Ascending aorta (tissue), 2 donors: ENCODE measurements at regions of chr12 and their contacts with region 1.

Region 1: GRCh38 chr12:70242695-70243509 is at the start of gene CNOT2:
- DNase-seq: peak; percentile 70 to 94
- H3K4me3 ChIP-seq: peak within 1 kb of the TSS; percentile 89 to 92
- H3K27ac ChIP-seq: peak within 1 kb of the TSS; percentile 97 to 98
- H3K4me1 ChIP-seq: peaks cover 5 to 29% of the 10 kb centered on the region in 2 donors
- H3K27me3 ChIP-seq: no peaks in the 10 kb centered on the region
- CTCF ChIP-seq: no peak
- total RNA-seq, gene CNOT2: 71.7 TPM

Region 2: DNA sequence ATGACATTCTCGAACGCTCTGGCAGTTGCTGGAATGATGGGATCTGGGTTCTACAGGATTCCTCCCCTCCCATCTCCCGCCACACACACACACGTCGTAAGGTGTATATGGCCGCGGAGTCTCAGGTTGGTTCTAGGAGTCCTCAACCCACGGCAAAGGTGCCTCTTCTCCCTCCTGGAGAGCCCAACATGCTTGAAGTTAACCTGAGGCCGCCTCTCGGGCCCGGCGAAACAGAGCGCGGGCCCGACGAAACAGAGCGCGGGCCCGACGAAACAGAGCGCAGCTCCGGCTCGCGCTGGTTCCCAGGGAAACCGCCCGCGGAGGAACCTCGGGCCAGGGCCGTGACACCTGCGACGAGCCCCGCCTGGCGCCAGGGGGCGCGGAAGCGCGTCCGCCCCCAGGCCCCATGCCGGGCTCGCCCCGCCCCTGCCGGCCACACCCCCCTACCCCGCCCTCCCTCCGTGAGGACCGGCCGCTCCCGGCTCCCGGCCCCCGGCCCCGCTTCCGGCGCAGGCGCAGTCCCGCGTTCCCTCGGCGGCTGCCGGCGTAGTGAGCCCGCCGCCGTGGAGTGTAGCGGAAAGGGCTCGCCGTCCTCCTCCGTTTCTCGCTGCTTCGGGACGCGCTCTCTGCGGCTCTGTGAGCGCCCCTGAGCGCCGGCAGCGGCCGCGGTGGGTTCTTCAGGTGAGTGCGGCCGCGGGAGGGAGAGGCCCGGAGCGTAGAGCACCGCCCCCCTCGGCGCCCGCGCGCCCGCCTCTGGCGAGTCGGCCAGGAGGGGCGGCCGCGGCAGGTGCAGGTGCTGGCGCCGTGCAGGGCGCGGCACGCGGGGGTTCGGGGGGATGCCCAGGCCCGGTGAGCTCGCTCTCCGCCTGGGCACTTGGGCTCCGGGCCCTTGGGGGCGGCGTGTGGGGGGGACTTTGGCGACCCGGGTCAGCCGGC is 504.3 kb before region 1 on chr12 and contains the start of gene RAB3IP:
- intact Hi-C with region 1: loop called (anchors 2 kb)
- DNase-seq: peak; percentile 35 to 87
- H3K4me3 ChIP-seq: peak within 1 kb of the TSS; percentile 92 to 95
- H3K27ac ChIP-seq: peak within 1 kb of the TSS; percentile 15 to 53
- H3K4me1 ChIP-seq: peaks cover 0 to 7% of the 10 kb centered on the region in 2 donors
- H3K27me3 ChIP-seq: no peaks in the 10 kb centered on the region
- CTCF ChIP-seq: peak; percentile 25 to 63 (median 51)
- total RNA-seq, gene RAB3IP: 17.2 TPM

Region 3: DNA sequence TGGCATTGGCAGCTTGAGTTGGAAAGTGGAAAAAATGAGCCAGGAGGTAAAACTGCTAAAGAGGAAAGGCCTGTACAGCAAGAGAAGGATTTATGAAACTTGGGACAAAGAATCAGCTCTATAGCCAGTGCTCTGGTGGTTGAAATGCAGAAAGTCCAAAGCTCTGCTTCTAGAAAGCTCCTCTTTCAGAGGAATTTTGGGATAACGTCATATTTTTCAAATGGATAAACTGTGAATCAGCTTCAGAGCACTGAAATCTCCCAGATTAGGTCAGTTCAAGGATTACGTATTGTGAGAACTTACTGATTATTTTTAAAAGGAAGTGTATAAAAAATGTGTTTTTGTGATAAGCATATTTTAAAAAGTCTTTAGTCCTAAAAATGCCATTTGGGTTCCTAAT is 202.8 kb before region 1 on chr12:
- intact Hi-C with region 1: loop called (anchors 5 kb)
- DNase-seq: no peak
- H3K4me3 ChIP-seq: no peak overlapping the region
- H3K27ac ChIP-seq: peak overlapping the region; percentile 45 to 66
- H3K4me1 ChIP-seq: peaks cover 0 to 7% of the 10 kb centered on the region in 2 donors
- H3K27me3 ChIP-seq: no peaks in the 10 kb centered on the region
- CTCF ChIP-seq: peak in 1 of 3 experiments; percentile 8

Region 4: GRCh38 chr12:70660620-70661219 is 417.8 kb after region 1 on chr12:
- intact Hi-C with region 1: no loop called
- DNase-seq: no peak
- H3K4me3 ChIP-seq: no peak overlapping the region
- H3K27ac ChIP-seq: no peak overlapping the region
- H3K4me1 ChIP-seq: peaks cover 0 to 2% of the 10 kb centered on the region in 2 donors
- H3K27me3 ChIP-seq: no peaks in the 10 kb centered on the region
- CTCF ChIP-seq: no peak

Region 5: GRCh38 chr12:71007781-71008404 is 765.0 kb after region 1 on chr12:
- intact Hi-C with region 1: loop called (anchors 10 kb)
- DNase-seq: no peak
- H3K4me3 ChIP-seq: no peak overlapping the region
- H3K27ac ChIP-seq: no peak overlapping the region
- H3K4me1 ChIP-seq: peaks cover 0 to 2% of the 10 kb centered on the region in 2 donors
- H3K27me3 ChIP-seq: no peaks in the 10 kb centered on the region
- CTCF ChIP-seq: no peak

Region 6: GRCh38 chr12:71754461-71755145 is 1511.7 kb after region 1 on chr12 and contains the start of gene RAB21:
- intact Hi-C with region 1: loop called (anchors 10 kb)
- DNase-seq: peak; percentile 95 to 99
- H3K4me3 ChIP-seq: peak within 1 kb of the TSS; percentile 91 to 96
- H3K27ac ChIP-seq: peak within 1 kb of the TSS; percentile 97 to 98
- H3K4me1 ChIP-seq: peaks cover 4 to 12% of the 10 kb centered on the region in 2 donors
- H3K27me3 ChIP-seq: no peaks in the 10 kb centered on the region
- CTCF ChIP-seq: peak; percentile 21 to 48 (median 46)
- total RNA-seq, gene RAB21: 6.5 TPM